ENCODE measurements at regions of chr12 and their contacts with region 1.

Region 1: GRCh38 chr12:108691175-108691997 is 39.9 kb downstream of the CORO1C start:
- H3K4me3 Mint-ChIP-seq: peak overlapping the region; percentile 65
- H3K27ac Mint-ChIP-seq: peak overlapping the region; percentile 95
- H3K4me1 Mint-ChIP-seq: peaks cover 83% of the 10 kb centered on the region
- H3K27me3 Mint-ChIP-seq: no peaks in the 10 kb centered on the region

Region 2: GRCh38 chr12:108709697-108710096 is 18.3 kb after region 1 on chr12:
- intact Hi-C with region 1: loop called (anchors 1 kb)
- H3K4me3 Mint-ChIP-seq: no peak overlapping the region
- H3K27ac Mint-ChIP-seq: peak overlapping the region; percentile 59
- H3K4me1 Mint-ChIP-seq: peaks cover 61% of the 10 kb centered on the region
- H3K27me3 Mint-ChIP-seq: no peaks in the 10 kb centered on the region

Region 3: GRCh38 chr12:108722992-108723766 is 31.8 kb after region 1 on chr12:
- intact Hi-C with region 1: loop called (anchors 5 kb)
- H3K4me3 Mint-ChIP-seq: peak overlapping the region; percentile 20
- H3K27ac Mint-ChIP-seq: peak overlapping the region; percentile 88
- H3K4me1 Mint-ChIP-seq: peaks cover 86% of the 10 kb centered on the region
- H3K27me3 Mint-ChIP-seq: no peaks in the 10 kb centered on the region

Region 4: DNA sequence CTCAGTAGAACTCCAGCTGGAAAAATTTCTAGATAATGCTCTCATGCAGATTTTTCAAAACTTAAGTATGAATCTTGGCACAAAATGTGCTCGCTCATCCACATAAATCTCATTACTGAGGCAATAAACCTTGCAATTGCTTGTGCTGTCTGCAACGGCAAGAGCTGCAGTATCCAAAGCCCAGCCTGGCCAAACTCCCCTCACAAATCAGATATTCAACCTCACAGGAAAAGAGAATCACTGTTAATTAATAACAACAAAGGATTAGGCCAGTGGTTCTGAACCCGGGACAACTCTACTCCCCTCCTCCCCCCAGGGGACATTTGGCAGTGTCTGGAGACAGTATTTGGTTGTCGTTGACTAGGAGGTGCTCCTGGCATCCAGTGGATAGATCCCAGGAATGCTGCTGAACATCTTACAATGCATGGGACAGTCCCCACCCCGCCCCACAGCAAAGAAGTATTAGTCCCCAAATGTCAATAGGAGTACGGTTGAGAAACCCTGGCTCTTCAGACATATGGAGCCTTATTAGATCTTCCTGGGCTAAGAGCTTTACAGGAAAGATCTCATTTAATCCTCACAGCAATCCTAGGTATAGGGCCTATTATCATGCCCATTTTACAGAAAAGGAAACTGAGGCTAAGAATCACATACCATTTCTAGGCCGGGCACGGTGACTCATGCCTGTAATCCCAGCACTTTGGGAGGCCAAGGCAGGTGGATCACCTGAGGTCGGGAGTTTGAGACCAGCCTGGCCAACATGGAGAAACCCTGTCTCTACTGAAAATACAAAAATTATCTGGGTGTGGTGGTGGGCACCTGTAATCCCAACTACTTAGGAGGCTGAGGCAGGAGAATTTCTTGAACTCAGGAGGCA is 59.4 kb after region 1 on chr12:
- intact Hi-C with region 1: no loop called
- H3K4me3 Mint-ChIP-seq: no peak overlapping the region
- H3K27ac Mint-ChIP-seq: no peak overlapping the region
- H3K4me1 Mint-ChIP-seq: peaks cover 5% of the 10 kb centered on the region
- H3K27me3 Mint-ChIP-seq: no peaks in the 10 kb centered on the region